Breast epithelium (tissue), 4 donors: ENCODE measurements at regions of chr3 and their contacts with region 1.

Region 1: DNA sequence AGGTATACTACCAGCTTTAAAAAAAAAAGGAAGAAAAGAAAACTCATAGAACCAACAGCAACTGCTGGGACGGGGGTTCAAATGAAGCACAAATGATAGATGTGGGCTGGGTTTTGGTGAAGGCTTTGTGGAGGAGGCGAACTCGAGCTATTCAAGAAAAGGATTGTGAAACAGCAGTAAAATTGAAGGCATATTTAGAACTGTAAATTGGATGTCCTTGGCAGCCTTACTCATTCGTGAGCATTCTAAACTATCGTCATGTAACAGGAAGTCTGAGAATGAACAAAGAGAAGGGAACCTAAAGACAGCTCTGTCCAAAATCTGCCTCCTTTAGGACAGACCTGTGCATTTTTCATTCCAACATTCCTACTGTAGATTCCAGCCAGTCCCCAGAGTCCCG is 97.8 kb downstream of the LARS2 start:
- DNase-seq: no peak
- H3K4me3 ChIP-seq: no peak overlapping the region
- H3K27ac ChIP-seq: peak overlapping the region in 1 of 2 donors; percentile 38
- H3K4me1 ChIP-seq: no peaks in the 10 kb centered on the region
- H3K27me3 ChIP-seq: no peaks in the 10 kb centered on the region
- CTCF ChIP-seq: no peak
- POLR2A ChIP-seq: no peak

Region 2: GRCh38 chr3:45280232-45280631 is 205.9 kb before region 1 on chr3:
- intact Hi-C with region 1: no loop called
- DNase-seq: no peak
- H3K4me3 ChIP-seq: no peak overlapping the region
- H3K27ac ChIP-seq: no peak overlapping the region
- H3K4me1 ChIP-seq: no peaks in the 10 kb centered on the region
- H3K27me3 ChIP-seq: no peaks in the 10 kb centered on the region
- CTCF ChIP-seq: no peak
- POLR2A ChIP-seq: no peak

Region 3: DNA sequence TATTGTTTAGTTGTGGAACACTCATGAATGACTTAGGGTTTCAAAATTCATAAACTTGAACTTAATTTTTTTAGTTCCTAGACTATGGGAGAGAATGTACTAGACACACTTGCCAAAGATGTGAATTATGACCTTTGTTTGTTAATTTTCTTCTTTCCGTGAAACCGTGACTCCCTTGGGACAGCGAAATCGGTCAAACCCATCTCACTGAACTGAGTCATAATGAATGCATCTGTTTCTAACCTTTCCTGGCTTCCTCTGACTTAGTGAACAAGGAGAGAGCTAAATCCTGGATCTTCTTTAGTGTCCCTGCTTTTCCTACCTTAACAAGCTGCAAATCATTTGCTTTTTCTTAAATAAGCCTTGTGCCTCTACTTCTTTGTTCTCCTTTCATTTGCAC is 12.3 kb before region 1 on chr3:
- intact Hi-C with region 1: no loop called
- DNase-seq: no peak
- H3K4me3 ChIP-seq: no peak overlapping the region
- H3K27ac ChIP-seq: no peak overlapping the region
- H3K4me1 ChIP-seq: no peaks in the 10 kb centered on the region
- H3K27me3 ChIP-seq: no peaks in the 10 kb centered on the region
- CTCF ChIP-seq: no peak
- POLR2A ChIP-seq: no peak

Region 4: GRCh38 chr3:46130631-46131288 is 644.6 kb after region 1 on chr3:
- intact Hi-C with region 1: loop called (anchors 5 kb)
- DNase-seq: no peak
- H3K4me3 ChIP-seq: no peak overlapping the region
- H3K27ac ChIP-seq: peak overlapping the region in 1 of 2 donors; percentile 8
- H3K4me1 ChIP-seq: no peaks in the 10 kb centered on the region
- H3K27me3 ChIP-seq: no peaks in the 10 kb centered on the region
- CTCF ChIP-seq: no peak
- POLR2A ChIP-seq: no peak